RWPE1 (cell line): ENCODE measurements at regions of chr1 and their contacts with region 1.

Region 1: GRCh38 chr1:1610796-1611195 is 4.5 kb upstream of the MIB2 start:
- DNase-seq: no peak
- H3K27ac ChIP-seq: 0 out of 2 replicates have a peak overlapping the region, but pooled peaks have one; percentile 2
- CTCF ChIP-seq: no peak

Region 2: DNA sequence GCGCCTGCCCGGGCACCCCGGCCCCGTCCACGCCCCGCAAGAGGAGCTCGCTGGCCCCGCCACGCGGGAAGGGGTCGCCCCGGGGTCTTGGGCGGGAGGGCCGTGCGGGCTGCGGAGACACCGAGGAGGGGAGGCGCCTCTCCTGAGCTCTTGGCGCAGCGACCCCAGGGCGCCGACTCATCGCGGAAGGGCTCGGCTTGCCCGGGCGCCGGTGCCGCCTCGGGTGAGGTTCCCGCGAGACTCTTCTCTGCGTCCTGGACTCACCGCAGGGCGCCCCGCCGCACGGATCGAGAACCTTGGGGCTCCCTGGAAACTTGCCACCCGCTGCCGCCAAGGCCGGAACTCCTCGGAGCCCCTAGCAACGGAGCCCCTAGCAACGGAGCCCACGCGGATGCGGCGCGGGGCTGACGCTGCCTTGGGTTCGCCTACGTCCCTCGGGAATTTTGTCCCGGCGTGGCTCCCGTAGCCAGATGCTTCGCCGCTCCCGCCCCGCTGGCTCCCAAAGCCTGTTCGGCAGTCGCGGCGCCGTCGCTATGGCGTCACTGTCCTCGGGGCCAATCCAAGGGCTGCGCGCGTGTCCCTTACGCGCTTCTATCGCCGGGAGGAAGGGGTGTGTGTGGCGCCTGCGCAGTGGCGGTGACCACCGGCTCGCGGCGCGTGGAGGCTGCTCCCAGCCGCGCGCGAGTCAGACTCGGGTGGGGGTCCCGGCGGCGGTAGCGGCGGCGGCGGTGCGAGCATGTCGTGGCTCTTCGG is 99.1 kb before region 1 on chr1 and contains the start of gene ATAD3A:
- CTCF ChIA-PET with region 1: no interaction called
- POLR2A ChIA-PET with region 1: no interaction called
- DNase-seq: peak; percentile 95
- H3K27ac ChIP-seq: peak within 1 kb of the TSS; percentile 90
- CTCF ChIP-seq: no peak

Region 3: DNA sequence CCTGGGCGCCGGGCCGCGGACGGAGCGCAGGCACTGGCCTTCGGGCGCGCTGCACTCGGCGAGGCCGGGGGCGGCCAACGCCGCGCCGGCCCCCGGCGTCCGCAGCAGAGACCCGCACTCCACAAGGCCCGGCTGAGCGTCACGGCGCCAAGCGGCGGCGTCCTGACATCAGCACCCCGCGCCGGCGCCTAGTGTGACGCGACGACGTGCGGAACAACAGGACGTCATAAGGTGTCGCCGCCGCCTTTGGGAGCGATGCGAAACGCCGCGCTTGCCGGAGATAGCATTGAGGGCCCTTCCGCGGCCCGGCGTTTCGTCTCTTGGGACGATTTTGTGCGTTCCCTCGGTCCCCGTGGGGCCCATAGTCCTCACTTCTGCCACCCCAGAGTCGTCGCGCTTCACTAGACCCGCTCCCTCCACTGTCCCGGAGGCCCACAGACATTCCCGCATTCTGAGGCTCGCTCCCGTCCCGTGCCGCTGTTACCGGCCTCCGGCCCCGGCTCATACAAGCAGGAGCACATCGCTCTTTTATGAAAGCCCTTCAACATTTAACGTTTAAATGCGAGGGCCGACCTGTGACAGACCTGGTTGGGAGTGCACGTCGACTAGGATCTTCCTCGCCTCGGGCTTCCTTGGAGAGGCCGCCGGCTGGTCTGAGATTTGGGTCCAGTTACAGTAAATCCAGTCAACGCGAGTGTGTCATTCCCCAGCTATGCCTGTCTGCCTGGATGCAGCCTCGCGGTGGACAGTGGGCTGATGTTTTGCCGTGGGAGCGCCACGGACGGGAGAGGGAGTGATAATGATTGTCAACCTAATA is 35.9 kb before region 1 on chr1 and contains the start of gene SSU72:
- CTCF ChIA-PET with region 1: no interaction called
- POLR2A ChIA-PET with region 1: no interaction called
- DNase-seq: peak; percentile 91
- H3K27ac ChIP-seq: peak within 1 kb of the TSS; percentile 94
- CTCF ChIP-seq: no peak

Region 4: DNA sequence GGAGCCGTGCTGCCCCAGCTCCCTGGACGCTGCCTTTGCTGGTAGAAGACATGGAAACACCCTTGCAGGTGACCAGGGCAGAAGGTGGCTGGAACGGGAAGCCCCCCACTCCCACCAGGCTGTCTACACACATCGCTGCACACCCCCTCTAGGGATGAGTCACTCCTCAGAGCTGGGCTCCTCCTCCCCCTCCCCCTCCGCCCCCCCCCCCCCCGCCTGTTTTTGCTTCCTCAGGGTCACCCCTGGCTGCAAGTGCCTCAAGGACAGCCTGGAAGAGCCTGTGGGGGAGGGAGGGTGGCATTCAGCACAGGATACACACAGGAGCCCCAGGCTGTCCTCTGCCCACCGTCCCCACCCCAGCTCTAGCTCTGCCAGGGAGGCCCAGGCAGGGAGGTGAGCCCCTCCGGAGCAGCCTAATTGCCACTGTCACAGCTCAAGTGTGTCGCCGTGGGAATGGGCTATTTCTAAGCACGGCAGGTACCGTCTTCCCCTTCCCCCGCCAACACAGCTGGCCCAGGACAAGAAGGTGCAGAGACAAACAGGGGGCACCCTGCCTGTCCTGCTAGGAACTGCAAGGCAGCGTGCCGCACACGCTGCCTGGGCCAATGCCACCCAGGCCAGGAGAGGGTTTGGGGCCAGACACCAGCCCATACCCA is 13.4 kb before region 1 on chr1:
- CTCF ChIA-PET with region 1: interaction called, 3 read pairs
- POLR2A ChIA-PET with region 1: interaction called, 11 read pairs
- DNase-seq: no peak
- H3K27ac ChIP-seq: no peak overlapping the region
- CTCF ChIP-seq: peak; percentile 13; the same call in 1 of the 2 replicates